ENCODE measurements at regions of chr5 and their contacts with region 1.

Region 1: DNA sequence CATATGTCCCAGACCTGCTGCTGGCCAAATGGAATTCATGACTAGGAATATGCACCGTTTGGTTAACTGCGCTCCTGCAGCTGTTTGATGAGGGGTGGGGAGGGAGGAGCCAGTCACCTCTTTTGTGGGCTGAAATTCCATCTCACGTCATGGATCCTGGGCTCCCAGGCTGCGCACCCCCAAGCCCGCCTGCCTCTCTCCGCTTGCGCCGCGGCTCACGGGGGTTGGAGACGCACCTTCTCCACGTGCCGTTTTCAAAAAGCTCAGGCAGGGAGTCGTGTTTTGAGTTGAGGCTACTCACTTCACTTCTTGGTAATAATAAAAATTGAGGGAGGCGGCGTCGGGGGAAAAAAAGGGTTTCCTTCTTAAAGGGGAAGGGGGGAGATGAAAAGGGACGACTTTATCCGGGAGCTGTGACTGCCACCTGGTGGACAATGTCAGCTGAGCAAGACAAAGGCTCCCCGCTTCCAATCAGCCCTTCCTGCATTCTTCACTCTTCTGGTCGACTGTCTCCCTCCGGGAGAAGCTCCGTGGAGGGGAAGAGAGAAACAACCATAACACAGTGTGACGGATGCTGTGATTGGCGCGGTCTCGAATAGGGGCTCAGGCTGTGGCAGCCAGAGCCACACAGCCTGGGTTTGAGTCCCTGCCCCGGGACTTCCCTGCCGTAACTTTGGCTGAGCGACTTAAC is 15.9 kb upstream of the C5orf47 start:
- DNase-seq: peak; percentile 64 to 73 (median 70)
- H3K4me3 ChIP-seq: peak overlapping the region in 1 of 2 donors; percentile 61
- H3K4me3 Mint-ChIP-seq: peak overlapping the region; percentile 66 to 81 (median 77)
- H3K27ac ChIP-seq: no peak overlapping the region
- H3K27ac Mint-ChIP-seq: peak overlapping the region in 1 of 7 donors; percentile 14
- H3K4me1 ChIP-seq: peaks cover 12% of the 10 kb centered on the region
- H3K4me1 Mint-ChIP-seq: peaks cover 5 to 11% (median 8%) of the 10 kb centered on the region in 4 donors
- H3K27me3 ChIP-seq: no peaks in the 10 kb centered on the region
- H3K27me3 Mint-ChIP-seq: peaks cover 10 to 12% of the 10 kb centered on the region in 2 donors

Region 2: DNA sequence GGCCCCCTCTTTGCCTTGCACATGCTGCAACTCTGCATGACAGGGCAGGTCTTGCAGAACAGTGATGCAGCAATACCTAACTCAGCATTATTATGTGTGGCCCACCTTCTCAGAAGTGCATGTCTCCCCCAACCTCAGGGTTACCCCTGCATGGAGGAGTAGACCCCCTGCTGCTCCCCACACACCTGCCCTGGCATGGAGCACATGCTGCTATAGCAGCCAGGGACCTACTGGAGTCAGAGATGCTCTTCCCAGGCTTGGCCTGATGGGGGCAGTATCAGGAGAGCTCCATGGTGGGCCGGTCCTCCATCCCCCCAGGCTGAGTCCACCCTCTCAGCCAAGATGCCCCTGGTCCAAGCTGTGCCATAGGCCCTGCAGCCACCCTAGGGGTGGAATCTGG is 343.4 kb before region 1 on chr5:
- CTCF ChIA-PET with region 1: interaction called, 211 read pairs
- POLR2A ChIA-PET with region 1: no interaction called
- intact Hi-C with region 1: no loop called
- DNase-seq: no peak
- H3K4me3 ChIP-seq: no peak overlapping the region
- H3K4me3 Mint-ChIP-seq: no peak overlapping the region
- H3K27ac ChIP-seq: no peak overlapping the region
- H3K27ac Mint-ChIP-seq: no peak overlapping the region
- H3K4me1 ChIP-seq: no peaks in the 10 kb centered on the region
- H3K4me1 Mint-ChIP-seq: peaks cover 0 to 3% (median 0%) of the 10 kb centered on the region in 4 donors
- H3K27me3 ChIP-seq: no peaks in the 10 kb centered on the region
- H3K27me3 Mint-ChIP-seq: peaks cover 0 to 3% of the 10 kb centered on the region in 2 donors

Measured in CD4-positive, alpha-beta memory T cell (primary cell).